ENCODE measurements at regions of chr13 and their contacts with region 1.

Region 1: DNA sequence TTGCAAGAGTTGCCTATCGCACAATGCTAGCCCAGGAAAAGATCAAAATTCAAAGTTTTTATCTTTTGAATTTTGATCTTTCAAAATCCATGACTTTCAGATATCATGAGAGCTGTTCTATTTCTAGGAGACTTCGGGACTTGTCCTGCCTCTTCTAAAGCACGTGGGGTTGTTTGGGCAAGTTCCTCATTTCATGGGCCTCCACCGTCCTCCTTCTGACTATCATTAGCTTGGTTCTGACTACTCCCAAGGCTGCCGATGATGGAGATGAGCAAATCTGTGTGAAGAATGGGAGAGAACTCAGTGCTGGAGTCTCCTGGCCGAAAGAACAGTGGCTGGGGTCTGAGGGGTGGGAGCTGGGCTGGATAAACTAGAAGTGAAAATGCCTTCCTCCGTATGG is 86.5 kb downstream of the COL4A1 start:
- DNase-seq: no peak
- H3K4me3 ChIP-seq: no peak overlapping the region
- H3K4me3 Mint-ChIP-seq: no peak overlapping the region
- H3K27ac Mint-ChIP-seq: peak overlapping the region; percentile 83
- H3K4me1 ChIP-seq: peaks cover 6% of the 10 kb centered on the region
- H3K4me1 Mint-ChIP-seq: peaks cover 8% of the 10 kb centered on the region
- H3K27me3 ChIP-seq: no peaks in the 10 kb centered on the region
- H3K27me3 Mint-ChIP-seq: no peaks in the 10 kb centered on the region
- CTCF ChIP-seq: no peak

Region 2: GRCh38 chr13:110187641-110188161 is 32.8 kb before region 1 on chr13:
- CTCF ChIA-PET with region 1: no interaction called
- POLR2A ChIA-PET with region 1: no interaction called
- intact Hi-C with region 1: loop called (anchors 2 kb)
- DNase-seq: no peak
- H3K4me3 ChIP-seq: no peak overlapping the region
- H3K4me3 Mint-ChIP-seq: no peak overlapping the region
- H3K27ac Mint-ChIP-seq: peak overlapping the region; percentile 89
- H3K4me1 ChIP-seq: peaks cover 37% of the 10 kb centered on the region
- H3K4me1 Mint-ChIP-seq: peaks cover 26% of the 10 kb centered on the region
- H3K27me3 ChIP-seq: no peaks in the 10 kb centered on the region
- H3K27me3 Mint-ChIP-seq: no peaks in the 10 kb centered on the region
- CTCF ChIP-seq: no peak

Region 3: GRCh38 chr13:110575322-110576069 is 355.0 kb after region 1 on chr13:
- CTCF ChIA-PET with region 1: no interaction called
- POLR2A ChIA-PET with region 1: no interaction called
- intact Hi-C with region 1: loop called (anchors 5 kb)
- DNase-seq: peak; percentile 47 to 59
- H3K4me3 ChIP-seq: no peak overlapping the region
- H3K4me3 Mint-ChIP-seq: no peak overlapping the region
- H3K27ac Mint-ChIP-seq: no peak overlapping the region
- H3K4me1 ChIP-seq: peaks cover 18% of the 10 kb centered on the region
- H3K4me1 Mint-ChIP-seq: peaks cover 21% of the 10 kb centered on the region
- H3K27me3 ChIP-seq: no peaks in the 10 kb centered on the region
- H3K27me3 Mint-ChIP-seq: no peaks in the 10 kb centered on the region
- CTCF ChIP-seq: peak in 1 of 2 experiments; percentile 37